Activated CD4-positive, alpha-beta memory T cell treated with anti-CD3 and anti-CD28 coated beads for 36 hours (primary cell): ENCODE measurements at regions of chr2 and their contacts with region 1.

Region 1: GRCh38 chr2:105858868-105859693 is 114.4 kb downstream of the NCK2 start:
- DNase-seq: peak; percentile 53
- H3K4me3 Mint-ChIP-seq: peak overlapping the region; percentile 17
- H3K27ac Mint-ChIP-seq: peak overlapping the region; percentile 96
- H3K4me1 Mint-ChIP-seq: peaks cover 93% of the 10 kb centered on the region
- H3K27me3 Mint-ChIP-seq: no peaks in the 10 kb centered on the region

Region 2: DNA sequence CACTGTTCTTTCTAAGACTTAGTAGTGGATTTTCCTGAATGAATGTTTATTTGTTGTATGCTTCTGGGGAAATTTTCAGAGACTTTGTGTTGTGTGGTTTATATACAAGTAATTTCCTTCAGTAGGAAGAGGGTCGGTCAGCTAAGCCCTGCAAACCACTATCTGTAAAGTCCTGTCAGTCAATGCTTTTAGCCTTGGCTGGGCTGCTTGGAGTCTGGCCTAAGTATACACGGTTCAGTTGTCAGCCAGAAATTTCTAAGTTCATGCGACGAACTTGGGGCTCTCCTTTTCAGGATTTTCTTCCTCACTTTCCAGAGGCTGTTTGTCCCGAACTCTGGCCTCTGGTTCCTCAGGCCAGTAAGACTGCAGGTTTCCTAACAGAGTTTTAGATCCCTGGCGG is 500.5 kb before region 1 on chr2:
- CTCF ChIA-PET with region 1: no interaction called
- POLR2A ChIA-PET with region 1: no interaction called
- intact Hi-C with region 1: no loop called
- DNase-seq: no peak
- H3K4me3 Mint-ChIP-seq: no peak overlapping the region
- H3K27ac Mint-ChIP-seq: no peak overlapping the region
- H3K4me1 Mint-ChIP-seq: peaks cover 15% of the 10 kb centered on the region
- H3K27me3 Mint-ChIP-seq: no peaks in the 10 kb centered on the region

Region 3: GRCh38 chr2:105671156-105671555 is 187.9 kb before region 1 on chr2:
- CTCF ChIA-PET with region 1: no interaction called
- POLR2A ChIA-PET with region 1: no interaction called
- intact Hi-C with region 1: loop called (anchors 10 kb)
- DNase-seq: no peak
- H3K4me3 Mint-ChIP-seq: no peak overlapping the region
- H3K27ac Mint-ChIP-seq: no peak overlapping the region
- H3K4me1 Mint-ChIP-seq: peaks cover 20% of the 10 kb centered on the region
- H3K27me3 Mint-ChIP-seq: peaks cover 3% of the 10 kb centered on the region

Region 4: GRCh38 chr2:105789745-105790460 is 69.2 kb before region 1 on chr2:
- CTCF ChIA-PET with region 1: no interaction called
- POLR2A ChIA-PET with region 1: interaction called, 3 read pairs
- intact Hi-C with region 1: loop called (anchors 2 kb)
- DNase-seq: peak; percentile 87
- H3K4me3 Mint-ChIP-seq: peak overlapping the region; percentile 59
- H3K27ac Mint-ChIP-seq: peak overlapping the region; percentile 96
- H3K4me1 Mint-ChIP-seq: peaks cover 95% of the 10 kb centered on the region
- H3K27me3 Mint-ChIP-seq: no peaks in the 10 kb centered on the region

Region 5: GRCh38 chr2:105827351-105828096 is 31.6 kb before region 1 on chr2:
- CTCF ChIA-PET with region 1: no interaction called
- POLR2A ChIA-PET with region 1: no interaction called
- intact Hi-C with region 1: loop called (anchors 1 kb)
- DNase-seq: no peak
- H3K4me3 Mint-ChIP-seq: no peak overlapping the region
- H3K27ac Mint-ChIP-seq: peak overlapping the region; percentile 70
- H3K4me1 Mint-ChIP-seq: peaks cover 94% of the 10 kb centered on the region
- H3K27me3 Mint-ChIP-seq: no peaks in the 10 kb centered on the region

Region 6: DNA sequence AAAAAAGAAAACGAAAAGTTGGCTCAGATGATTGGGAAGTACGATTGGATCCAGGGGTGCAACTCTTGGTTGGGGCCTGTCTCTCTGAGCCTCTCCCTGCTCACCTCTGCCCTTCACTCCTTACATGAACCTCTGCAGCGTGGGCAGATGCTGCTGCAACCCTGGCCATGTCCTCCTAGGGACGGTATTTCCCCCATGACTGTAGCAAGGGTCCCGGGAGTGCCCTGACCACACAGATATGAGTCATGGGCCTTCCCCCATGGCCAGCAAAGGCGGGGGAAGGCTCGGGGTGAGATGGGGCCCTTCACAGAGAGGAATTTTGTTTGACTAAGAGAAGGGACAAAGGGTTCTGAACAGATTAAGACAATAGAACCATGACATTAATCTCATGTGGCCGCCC is 14.6 kb after region 1 on chr2:
- CTCF ChIA-PET with region 1: interaction called, 3 read pairs
- POLR2A ChIA-PET with region 1: interaction called, 4 read pairs
- intact Hi-C with region 1: loop called (anchors 1 kb)
- DNase-seq: peak; percentile 89
- H3K4me3 Mint-ChIP-seq: peak overlapping the region; percentile 3
- H3K27ac Mint-ChIP-seq: peak overlapping the region; percentile 87
- H3K4me1 Mint-ChIP-seq: peaks cover 92% of the 10 kb centered on the region
- H3K27me3 Mint-ChIP-seq: no peaks in the 10 kb centered on the region

Region 7: GRCh38 chr2:106189764-106190468 is 330.8 kb after region 1 on chr2:
- CTCF ChIA-PET with region 1: no interaction called
- POLR2A ChIA-PET with region 1: no interaction called
- intact Hi-C with region 1: no loop called
- DNase-seq: no peak
- H3K4me3 Mint-ChIP-seq: no peak overlapping the region
- H3K27ac Mint-ChIP-seq: no peak overlapping the region
- H3K4me1 Mint-ChIP-seq: peaks cover 61% of the 10 kb centered on the region
- H3K27me3 Mint-ChIP-seq: no peaks in the 10 kb centered on the region